HCT116 (cell line): ENCODE measurements at regions of chr10 and their contacts with region 1.

Region 1: DNA sequence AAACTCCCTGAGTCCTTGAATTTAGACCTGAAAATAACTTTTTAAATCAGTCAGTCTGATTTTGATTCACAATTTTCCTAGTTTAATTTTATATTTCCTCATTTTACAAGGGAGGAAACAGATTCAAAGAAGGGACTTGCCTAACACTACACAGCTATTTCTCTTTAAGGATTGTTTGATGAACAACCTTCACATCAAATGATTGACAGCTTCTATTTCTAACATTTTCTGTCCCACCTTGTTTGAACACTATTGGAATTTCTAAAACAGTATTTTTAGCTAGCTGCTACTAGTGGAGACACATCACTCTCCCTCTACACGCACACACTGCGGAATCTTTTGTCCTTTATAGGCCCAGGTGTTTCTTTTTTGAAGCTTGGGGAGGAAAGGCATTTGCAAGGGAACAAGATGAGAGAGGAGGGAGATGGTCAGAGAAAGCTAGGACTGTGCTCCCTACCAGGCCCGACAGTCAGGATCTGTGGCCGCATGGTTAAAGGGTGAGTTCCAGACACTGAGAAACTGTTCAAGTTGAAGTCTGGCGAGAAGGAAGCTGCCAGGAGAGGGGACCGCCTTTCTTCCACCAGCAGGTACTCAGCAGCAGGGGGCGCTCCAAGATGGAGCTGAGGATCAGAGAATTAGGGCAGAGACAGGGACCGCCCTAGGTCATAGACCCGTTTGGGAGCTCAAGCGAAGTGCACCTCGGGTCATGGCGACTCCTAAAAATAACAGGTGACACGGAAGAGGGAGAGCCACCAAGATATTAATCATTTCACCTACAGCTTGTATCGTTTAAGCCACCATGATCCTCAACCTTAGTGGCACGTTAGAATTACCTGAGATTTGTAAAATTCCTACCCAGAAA is 49.7 kb downstream of the DNAJC12 start:
- DNase-seq: peak; percentile 42
- ATAC-seq: peak; percentile 96
- H3K4me3 ChIP-seq: no peak overlapping the region
- H3K27ac ChIP-seq: no peak overlapping the region
- H3K4me1 ChIP-seq: peaks cover 0 to 7% of the 10 kb centered on the region in 2 experiments; a peak in 1 of 4 replicates
- H3K27me3 ChIP-seq: no peaks in the 10 kb centered on the region
- CTCF ChIP-seq: peak; percentile 69 to 89 (median 89); a peak in 5 of 6 replicates
- POLR2A ChIP-seq: no peak
- RAD21 ChIP-seq: peak; percentile 84

Region 2: GRCh38 chr10:67697724-67698131 is 90.5 kb before region 1 on chr10:
- CTCF ChIA-PET with region 1: interaction called, 13 read pairs
- POLR2A ChIA-PET with region 1: no interaction called
- RAD21 ChIA-PET with region 1: no interaction called
- intact Hi-C with region 1: no loop called
- DNase-seq: peak; percentile 41
- ATAC-seq: peak; percentile 94
- H3K4me3 ChIP-seq: no peak overlapping the region
- H3K27ac ChIP-seq: no peak overlapping the region
- H3K4me1 ChIP-seq: peaks cover 0 to 3% of the 10 kb centered on the region in 2 experiments; a peak in 2 of 4 replicates
- H3K27me3 ChIP-seq: no peaks in the 10 kb centered on the region
- CTCF ChIP-seq: peak; percentile 64 to 69 (median 66); a peak in 5 of 6 replicates
- POLR2A ChIP-seq: no peak
- RAD21 ChIP-seq: peak; percentile 64

Region 3: GRCh38 chr10:67803588-67804394 is 15.5 kb after region 1 on chr10:
- CTCF ChIA-PET with region 1: interaction called, 13 read pairs
- POLR2A ChIA-PET with region 1: no interaction called
- RAD21 ChIA-PET with region 1: no interaction called
- intact Hi-C with region 1: no loop called
- DNase-seq: no peak
- ATAC-seq: no peak
- H3K4me3 ChIP-seq: no peak overlapping the region
- H3K27ac ChIP-seq: no peak overlapping the region
- H3K4me1 ChIP-seq: no peaks in the 10 kb centered on the region
- H3K27me3 ChIP-seq: no peaks in the 10 kb centered on the region
- CTCF ChIP-seq: no peak
- POLR2A ChIP-seq: no peak
- RAD21 ChIP-seq: no peak

Region 4: DNA sequence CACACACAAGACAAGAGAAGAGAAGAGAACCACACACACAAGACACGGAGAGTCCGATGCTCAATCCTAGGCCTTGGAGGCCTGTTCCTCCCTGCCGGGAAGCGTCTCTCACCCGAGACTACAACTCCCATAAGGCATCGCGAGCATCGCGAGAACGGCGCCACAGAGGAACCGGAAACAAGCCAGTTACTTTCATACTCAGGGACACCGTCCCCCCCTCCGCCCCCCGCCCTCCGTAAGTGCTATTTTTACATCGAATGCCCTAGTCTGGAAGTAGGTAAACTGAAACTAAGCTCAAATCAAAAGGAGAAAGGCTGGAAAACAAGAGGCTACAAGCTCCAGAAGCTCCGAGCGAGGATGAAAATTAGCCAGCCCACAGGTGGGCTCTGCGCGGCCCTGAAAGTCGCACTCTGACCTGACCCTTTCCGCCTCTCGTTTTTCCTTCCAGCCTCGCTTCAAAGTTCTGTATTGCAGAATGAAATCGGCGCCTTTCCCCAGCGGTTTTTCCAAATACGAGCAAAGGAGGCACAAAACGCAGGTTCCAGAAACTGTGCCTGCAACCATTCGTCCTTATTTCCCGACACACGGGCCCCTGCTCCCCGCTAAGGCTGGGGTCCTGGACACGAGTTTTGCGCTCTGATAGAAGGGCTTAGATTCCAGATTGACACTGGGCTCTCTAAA is 61.2 kb after region 1 on chr10:
- CTCF ChIA-PET with region 1: interaction called, 12 read pairs
- POLR2A ChIA-PET with region 1: no interaction called
- RAD21 ChIA-PET with region 1: no interaction called
- intact Hi-C with region 1: no loop called
- DNase-seq: peak; percentile 87
- ATAC-seq: peak; percentile 99
- H3K4me3 ChIP-seq: peak overlapping the region; percentile 88
- H3K27ac ChIP-seq: peak overlapping the region; percentile 64
- H3K4me1 ChIP-seq: 0 out of 4 replicates have a peak, but pooled peaks cover 0 to 2% of the 10 kb centered on the region in 2 experiments
- H3K27me3 ChIP-seq: no peaks in the 10 kb centered on the region
- CTCF ChIP-seq: no peak
- POLR2A ChIP-seq: peak; percentile 56
- RAD21 ChIP-seq: no peak

Region 5: GRCh38 chr10:68156373-68157185 is 368.3 kb after region 1 on chr10:
- CTCF ChIA-PET with region 1: interaction called, 13 read pairs
- POLR2A ChIA-PET with region 1: no interaction called
- RAD21 ChIA-PET with region 1: no interaction called
- intact Hi-C with region 1: loop called (anchors 5 kb)
- DNase-seq: peak; percentile 58
- ATAC-seq: peak; percentile 39; the same call in 1 of the 2 replicates
- H3K4me3 ChIP-seq: no peak overlapping the region
- H3K27ac ChIP-seq: no peak overlapping the region
- H3K4me1 ChIP-seq: peaks cover 15 to 51% of the 10 kb centered on the region in 2 experiments
- H3K27me3 ChIP-seq: no peaks in the 10 kb centered on the region
- CTCF ChIP-seq: peak; percentile 80 to 94 (median 85)
- POLR2A ChIP-seq: no peak
- RAD21 ChIP-seq: peak; percentile 92

Region 6: GRCh38 chr10:68301790-68302502 is 513.7 kb after region 1 on chr10:
- CTCF ChIA-PET with region 1: interaction called, 19 read pairs
- POLR2A ChIA-PET with region 1: interaction called, 3 read pairs
- RAD21 ChIA-PET with region 1: interaction called in 1 of 2 experiments, 6 read pairs
- intact Hi-C with region 1: loop called (anchors 1 kb)
- DNase-seq: peak; percentile 49
- ATAC-seq: peak; percentile 90
- H3K4me3 ChIP-seq: no peak overlapping the region
- H3K27ac ChIP-seq: no peak overlapping the region
- H3K4me1 ChIP-seq: no peaks in the 10 kb centered on the region
- H3K27me3 ChIP-seq: no peaks in the 10 kb centered on the region
- CTCF ChIP-seq: peak; percentile 46 to 75 (median 61)
- POLR2A ChIP-seq: no peak
- RAD21 ChIP-seq: peak; percentile 81